Mammary epithelial cell (primary cell): ENCODE measurements at regions of chr2 and their contacts with region 1.

Region 1: GRCh38 chr2:44549095-44549463 is 187.3 kb downstream of the CAMKMT start:
- DNase-seq: peak; percentile 76
- H3K4me3 ChIP-seq: peak overlapping the region in 1 of 3 experiments; percentile 0
- H3K27ac ChIP-seq: peak overlapping the region; percentile 55
- H3K4me1 ChIP-seq: peaks cover 49% of the 10 kb centered on the region
- H3K27me3 ChIP-seq: no peaks in the 10 kb centered on the region
- CTCF ChIP-seq: no peak

Region 2: DNA sequence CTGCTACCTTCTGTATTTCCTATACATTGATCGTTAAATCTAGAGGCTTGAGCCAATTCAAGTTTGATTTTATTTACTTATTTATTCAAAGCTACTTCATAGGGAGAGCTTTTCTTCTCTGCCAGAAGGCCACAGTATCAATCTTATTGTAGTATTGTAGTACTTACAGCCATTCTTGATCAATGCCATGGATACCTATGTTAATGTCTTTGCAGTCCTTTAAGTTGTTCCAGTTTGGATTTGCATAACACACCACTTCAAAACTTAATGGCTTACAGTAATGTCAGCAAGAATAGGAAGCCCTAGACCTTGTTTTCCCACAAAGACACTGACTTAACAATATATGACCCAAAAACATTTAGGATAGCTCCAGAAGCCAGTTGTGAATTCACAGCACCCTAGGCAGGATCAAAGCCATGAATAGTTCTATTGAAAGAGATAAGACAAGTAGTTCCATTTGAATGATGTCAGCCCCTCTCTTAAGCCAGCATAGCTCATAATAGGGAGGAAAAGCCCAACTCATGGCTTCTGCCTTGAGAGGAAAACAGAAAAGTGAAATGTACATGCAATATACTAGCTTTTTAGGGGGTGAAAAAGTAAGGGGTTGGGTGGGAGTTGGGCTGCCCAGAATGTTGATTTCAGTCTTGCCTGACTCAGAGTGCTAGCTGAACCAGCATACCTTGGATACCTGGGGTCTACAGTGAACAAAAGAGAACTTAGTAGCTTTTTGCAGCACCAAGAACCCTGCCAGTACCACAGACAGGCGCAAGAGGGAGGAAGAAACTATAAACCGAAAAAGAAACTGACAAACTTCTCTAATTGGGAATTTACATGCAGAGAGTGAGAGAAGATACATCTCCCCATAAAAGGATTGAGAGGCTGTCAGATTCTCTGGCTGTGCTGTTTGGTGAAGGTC is 85.9 kb before region 1 on chr2:
- CTCF ChIA-PET with region 1: no interaction called
- dilution Hi-C with region 1: no loop called
- in situ Hi-C with region 1: no loop called
- intact Hi-C with region 1: no loop called
- DNase-seq: no peak
- H3K4me3 ChIP-seq: no peak overlapping the region
- H3K27ac ChIP-seq: no peak overlapping the region
- H3K4me1 ChIP-seq: no peaks in the 10 kb centered on the region
- H3K27me3 ChIP-seq: no peaks in the 10 kb centered on the region
- CTCF ChIP-seq: no peak

Region 3: GRCh38 chr2:44572196-44572900 is 23.3 kb after region 1 on chr2:
- CTCF ChIA-PET with region 1: no interaction called
- dilution Hi-C with region 1: no loop called
- in situ Hi-C with region 1: no loop called
- intact Hi-C with region 1: loop called (anchors 2 kb)
- DNase-seq: peak; percentile 81
- H3K4me3 ChIP-seq: no peak overlapping the region
- H3K27ac ChIP-seq: peak overlapping the region; percentile 89
- H3K4me1 ChIP-seq: peaks cover 42% of the 10 kb centered on the region
- H3K27me3 ChIP-seq: no peaks in the 10 kb centered on the region
- CTCF ChIP-seq: no peak

Region 4: GRCh38 chr2:44582363-44583008 is 33.4 kb after region 1 on chr2:
- CTCF ChIA-PET with region 1: no interaction called
- dilution Hi-C with region 1: loop called (anchors 5 kb)
- in situ Hi-C with region 1: no loop called
- intact Hi-C with region 1: no loop called
- DNase-seq: peak; percentile 75
- H3K4me3 ChIP-seq: no peak overlapping the region
- H3K27ac ChIP-seq: no peak overlapping the region
- H3K4me1 ChIP-seq: peaks cover 39% of the 10 kb centered on the region
- H3K27me3 ChIP-seq: no peaks in the 10 kb centered on the region
- CTCF ChIP-seq: no peak

Region 5: GRCh38 chr2:45199973-45200372 is 650.9 kb after region 1 on chr2:
- CTCF ChIA-PET with region 1: no interaction called
- dilution Hi-C with region 1: no loop called
- in situ Hi-C with region 1: no loop called
- intact Hi-C with region 1: no loop called
- DNase-seq: no peak
- H3K4me3 ChIP-seq: no peak overlapping the region
- H3K27ac ChIP-seq: no peak overlapping the region
- H3K4me1 ChIP-seq: no peaks in the 10 kb centered on the region
- H3K27me3 ChIP-seq: no peaks in the 10 kb centered on the region
- CTCF ChIP-seq: no peak